ENCODE measurements at regions of chr7 and their contacts with region 1.

Region 1: GRCh38 chr7:28389504-28390395 is 22.6 kb upstream of the CREB5 start:
- DNase-seq: peak in 1 of 2 experiments; percentile 65
- ATAC-seq: peak in 1 of 2 experiments; percentile 42; a peak in 2 of 6 replicates
- H3K4me3 ChIP-seq: peak overlapping the region; percentile 25; the same call in 2 of the 3 replicates
- H3K27ac ChIP-seq: no peak overlapping the region
- H3K4me1 ChIP-seq: 0 out of 3 replicates have a peak, but pooled peaks cover 4% of the 10 kb centered on the region
- CTCF ChIP-seq: peak; percentile 84
- EP300 ChIP-seq: no peak
- POLR2A ChIP-seq: no peak
- RAD21 ChIP-seq: peak; percentile 76 to 81

Region 2: DNA sequence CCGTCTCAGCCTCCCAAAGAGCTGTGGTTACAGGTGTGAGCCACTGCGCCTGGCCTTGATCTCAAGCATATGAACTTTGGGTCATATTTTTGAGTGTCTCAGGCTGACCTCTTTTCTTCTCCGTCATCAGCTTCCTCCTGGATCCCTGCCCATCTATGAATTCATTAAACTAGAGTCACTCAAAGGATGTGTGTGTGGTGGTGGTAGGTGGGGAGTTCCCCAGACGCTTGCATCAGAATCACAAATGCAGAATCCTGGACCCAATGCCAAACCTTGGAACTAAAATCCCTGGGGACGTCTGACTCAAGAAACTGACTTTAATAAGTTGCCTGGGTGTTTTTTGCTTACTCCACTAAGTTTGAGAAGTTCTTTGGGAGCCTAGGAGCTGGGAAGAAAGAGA is 15.9 kb after region 1 on chr7:
- CTCF ChIA-PET with region 1: interaction called, 25 read pairs
- POLR2A ChIA-PET with region 1: no interaction called
- DNase-seq: peak in 1 of 2 experiments; percentile 48
- ATAC-seq: no peak
- H3K4me3 ChIP-seq: no peak overlapping the region
- H3K27ac ChIP-seq: peak overlapping the region in 1 of 2 experiments; percentile 51; a peak in 2 of 6 replicates
- H3K4me1 ChIP-seq: peaks cover 25% of the 10 kb centered on the region
- CTCF ChIP-seq: no peak
- EP300 ChIP-seq: 0 out of 5 replicates have a peak, but pooled peaks of 1 of the 2 experiments have one; percentile 11
- POLR2A ChIP-seq: no peak
- RAD21 ChIP-seq: no peak

Measured in A549 (cell line).